ENCODE measurements at regions of chr7 and their contacts with region 1.

Region 1: GRCh38 chr7:19754521-19755116 is 18.8 kb downstream of the TMEM196 start:
- DNase-seq: peak; percentile 75
- H3K4me3 ChIP-seq: no peak overlapping the region
- H3K27ac ChIP-seq: no peak overlapping the region
- H3K4me1 ChIP-seq: no peaks in the 10 kb centered on the region
- H3K27me3 ChIP-seq: no peaks in the 10 kb centered on the region
- CTCF ChIP-seq: peak; percentile 36 to 43
- POLR2A ChIP-seq: no peak

Region 2: DNA sequence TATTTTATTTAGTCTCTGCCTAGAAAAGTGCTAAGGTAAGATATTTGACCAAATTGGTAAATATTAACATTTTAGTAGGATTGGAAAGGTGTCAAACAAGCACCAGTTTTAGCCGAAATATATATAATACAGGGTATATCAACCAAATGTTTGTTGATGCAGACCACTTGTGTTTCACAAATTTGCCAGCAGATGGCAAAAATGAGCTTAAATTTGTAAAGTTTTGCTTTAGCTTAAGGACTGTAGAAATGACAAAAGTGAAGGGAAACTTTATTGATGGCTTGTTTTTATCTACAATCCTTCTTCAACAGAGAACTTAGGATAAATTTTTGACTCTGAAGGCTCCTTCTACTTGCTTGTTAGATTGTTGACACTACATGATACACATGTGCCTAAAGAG is 40.9 kb before region 1 on chr7:
- CTCF ChIA-PET with region 1: interaction called, 18 read pairs
- POLR2A ChIA-PET with region 1: no interaction called
- dilution Hi-C with region 1: no loop called
- intact Hi-C with region 1: no loop called
- DNase-seq: peak; percentile 62
- H3K4me3 ChIP-seq: no peak overlapping the region
- H3K27ac ChIP-seq: no peak overlapping the region
- H3K4me1 ChIP-seq: no peaks in the 10 kb centered on the region
- H3K27me3 ChIP-seq: peaks cover 10 to 29% of the 10 kb centered on the region in 2 experiments
- CTCF ChIP-seq: peak; percentile 20 to 39
- POLR2A ChIP-seq: no peak

Region 3: DNA sequence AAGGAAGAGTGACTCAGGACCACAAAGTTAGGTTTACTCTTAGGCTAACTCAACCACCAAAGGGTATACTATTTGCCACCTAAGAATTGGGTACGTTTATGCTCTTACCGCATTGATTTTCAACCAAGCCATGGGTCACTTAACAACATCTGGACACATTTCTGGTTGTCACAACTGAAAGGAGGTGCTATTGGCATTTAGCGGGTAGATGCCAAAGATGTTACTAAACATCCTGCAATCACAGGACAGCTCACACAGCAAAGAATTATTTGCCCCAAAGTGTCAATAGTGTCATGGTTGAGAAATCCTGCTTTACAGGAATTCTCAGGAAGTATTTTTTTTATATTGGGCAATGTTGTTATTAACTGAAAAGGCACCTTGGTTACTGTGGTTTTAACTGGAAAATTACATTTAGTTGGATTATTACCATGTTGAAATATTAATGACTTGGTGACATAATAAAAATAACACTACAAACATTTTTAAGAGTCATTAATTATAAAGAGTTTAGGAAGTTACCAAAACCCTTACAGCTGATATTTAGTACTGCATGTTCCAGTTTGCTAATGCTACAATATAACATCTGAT is 203.8 kb after region 1 on chr7:
- CTCF ChIA-PET with region 1: interaction called, 6 read pairs
- POLR2A ChIA-PET with region 1: no interaction called
- dilution Hi-C with region 1: no loop called
- intact Hi-C with region 1: loop called (anchors 10 kb)
- DNase-seq: peak; percentile 80
- H3K4me3 ChIP-seq: no peak overlapping the region
- H3K27ac ChIP-seq: peak overlapping the region; percentile 83
- H3K4me1 ChIP-seq: peaks cover 17% of the 10 kb centered on the region
- H3K27me3 ChIP-seq: no peaks in the 10 kb centered on the region
- CTCF ChIP-seq: no peak
- POLR2A ChIP-seq: no peak

Region 4: GRCh38 chr7:19982841-19983835 is 228.5 kb after region 1 on chr7:
- CTCF ChIA-PET with region 1: interaction called, 4 read pairs
- POLR2A ChIA-PET with region 1: no interaction called
- dilution Hi-C with region 1: no loop called
- intact Hi-C with region 1: loop called (anchors 2 kb)
- DNase-seq: peak; percentile 58
- H3K4me3 ChIP-seq: no peak overlapping the region
- H3K27ac ChIP-seq: no peak overlapping the region
- H3K4me1 ChIP-seq: no peaks in the 10 kb centered on the region
- H3K27me3 ChIP-seq: no peaks in the 10 kb centered on the region
- CTCF ChIP-seq: peak in 1 of 2 donors; percentile 31
- POLR2A ChIP-seq: no peak

Region 5: DNA sequence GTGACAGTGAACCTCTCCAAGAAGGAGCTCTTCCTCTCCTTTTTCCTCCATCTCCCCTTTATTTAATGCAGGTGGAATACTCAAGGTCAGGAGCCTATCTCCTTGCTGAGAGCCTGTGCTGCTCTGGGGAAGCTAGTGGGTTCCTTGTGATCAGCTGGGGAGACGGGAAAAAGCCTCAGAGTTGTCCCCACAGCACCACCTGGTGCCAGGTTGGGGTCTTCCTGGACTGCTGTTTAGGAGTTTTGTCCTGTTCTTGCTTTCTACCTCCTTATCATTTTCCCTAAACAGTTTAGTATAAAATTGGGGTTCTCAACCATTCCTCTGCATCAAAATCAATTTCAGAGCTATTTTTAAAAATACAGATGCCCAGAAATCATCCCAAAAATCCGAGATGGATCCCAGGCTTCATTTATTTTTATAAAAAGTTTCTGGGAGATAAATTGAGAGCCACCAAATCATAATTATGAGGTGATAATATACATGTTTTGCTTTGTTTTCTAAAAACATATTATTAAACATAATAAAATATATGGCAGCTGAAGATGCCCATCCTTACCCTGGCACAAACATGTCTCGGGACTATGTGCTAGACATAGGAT is 418.2 kb after region 1 on chr7:
- CTCF ChIA-PET with region 1: interaction called, 37 read pairs
- POLR2A ChIA-PET with region 1: no interaction called
- dilution Hi-C with region 1: no loop called
- intact Hi-C with region 1: loop called (anchors 2 kb)
- DNase-seq: peak; percentile 51
- H3K4me3 ChIP-seq: no peak overlapping the region
- H3K27ac ChIP-seq: no peak overlapping the region
- H3K4me1 ChIP-seq: no peaks in the 10 kb centered on the region
- H3K27me3 ChIP-seq: no peaks in the 10 kb centered on the region
- CTCF ChIP-seq: peak; percentile 55 to 66
- POLR2A ChIP-seq: no peak

Measured in endothelial cell of umbilical vein (primary cell).